Activated CD4-positive, alpha-beta T cell treated with anti-CD3 and anti-CD28 coated beads, Interleukin-2, amount 10 ng/mL, durations not matched to agents 7 days and 5 days (primary cell): ENCODE measurements at regions of chr3 and their contacts with region 1.

Region 1: GRCh38 chr3:118884748-118885206 is 149.9 kb downstream of the IGSF11 start:
- DNase-seq: peak; percentile 82
- H3K4me3 Mint-ChIP-seq: no peak overlapping the region
- H3K27ac Mint-ChIP-seq: no peak overlapping the region
- H3K4me1 Mint-ChIP-seq: peaks cover 12% of the 10 kb centered on the region
- H3K27me3 Mint-ChIP-seq: peaks cover 10% of the 10 kb centered on the region

Region 2: DNA sequence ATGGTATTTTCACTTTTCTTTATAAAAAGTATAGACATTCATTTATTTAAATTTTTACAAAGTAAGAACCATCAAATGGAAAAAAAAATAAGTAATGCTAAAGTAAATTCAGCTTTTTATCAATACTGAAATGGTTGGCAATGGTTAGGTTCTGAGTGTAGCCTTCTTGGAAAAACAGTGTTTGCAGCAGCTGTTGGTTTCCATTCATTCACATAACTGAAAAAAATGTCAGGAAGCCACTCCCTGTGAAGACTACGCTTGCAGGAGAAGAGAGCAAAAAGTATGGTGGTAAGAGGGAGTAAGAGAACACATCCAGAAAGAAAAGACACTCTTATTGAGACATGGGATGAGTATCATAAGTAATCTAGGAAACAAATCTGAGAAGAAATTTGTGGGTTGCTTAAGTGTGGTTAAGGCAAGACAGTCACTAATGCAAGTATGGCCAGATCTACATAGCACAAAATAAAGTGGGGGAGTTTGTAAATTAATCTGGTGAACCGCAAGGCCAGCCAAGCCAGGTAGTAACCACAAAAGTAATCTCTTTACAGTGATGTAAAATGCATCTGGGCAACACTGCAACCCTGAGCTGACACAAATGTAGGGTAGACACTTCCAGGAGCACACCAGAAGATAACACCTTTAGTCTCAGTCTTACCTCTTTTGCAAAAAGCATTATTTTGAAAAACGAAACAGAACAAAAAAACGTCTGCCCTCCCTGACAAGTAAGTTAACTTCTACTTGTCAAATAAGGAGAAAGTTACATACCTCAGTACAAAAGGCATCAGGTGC is 16.2 kb after region 1 on chr3:
- CTCF ChIA-PET with region 1: no interaction called
- POLR2A ChIA-PET with region 1: no interaction called
- DNase-seq: no peak
- H3K4me3 Mint-ChIP-seq: no peak overlapping the region
- H3K27ac Mint-ChIP-seq: no peak overlapping the region
- H3K4me1 Mint-ChIP-seq: peaks cover 9% of the 10 kb centered on the region
- H3K27me3 Mint-ChIP-seq: peaks cover 18% of the 10 kb centered on the region

Region 3: GRCh38 chr3:119034256-119035013 is 149.7 kb after region 1 on chr3 and contains the start of gene IGSF11:
- CTCF ChIA-PET with region 1: interaction called, 59 read pairs
- POLR2A ChIA-PET with region 1: no interaction called
- DNase-seq: peak; percentile 65
- H3K4me3 Mint-ChIP-seq: peak within 1 kb of the TSS; percentile 83
- H3K27ac Mint-ChIP-seq: no peak within 1 kb of the TSS
- H3K4me1 Mint-ChIP-seq: peaks cover 13% of the 10 kb centered on the region
- H3K27me3 Mint-ChIP-seq: peaks cover 58% of the 10 kb centered on the region
- total RNA-seq, gene IGSF11: 1.2 to 2.0 TPM